ENCODE measurements at regions of chr17 and their contacts with region 1.

Region 1: GRCh38 chr17:48543107-48543853 is 1.6 kb downstream of the HOXB2 start:
- DNase-seq: peak; percentile 67
- H3K4me3 ChIP-seq: peak overlapping the region; percentile 85
- H3K27ac ChIP-seq: peak overlapping the region; percentile 95
- H3K4me1 ChIP-seq: peaks cover 38% of the 10 kb centered on the region
- H3K27me3 ChIP-seq: no peaks in the 10 kb centered on the region
- CTCF ChIP-seq: no peak; the same call in 1 of the 2 replicates

Region 2: GRCh38 chr17:48505787-48506645 is 37.3 kb before region 1 on chr17:
- CTCF ChIA-PET with region 1: no interaction called
- POLR2A ChIA-PET with region 1: no interaction called
- intact Hi-C with region 1: no loop called
- DNase-seq: peak; percentile 55
- H3K4me3 ChIP-seq: no peak overlapping the region
- H3K27ac ChIP-seq: no peak overlapping the region
- H3K4me1 ChIP-seq: no peaks in the 10 kb centered on the region
- H3K27me3 ChIP-seq: no peaks in the 10 kb centered on the region
- CTCF ChIP-seq: no peak

Region 3: GRCh38 chr17:48577946-48578615 is 34.8 kb after region 1 on chr17 and contains the start of gene HOXB4:
- CTCF ChIA-PET with region 1: no interaction called
- POLR2A ChIA-PET with region 1: interaction called, 9 read pairs
- intact Hi-C with region 1: loop called (anchors 2 kb)
- DNase-seq: peak; percentile 89
- H3K4me3 ChIP-seq: peak within 1 kb of the TSS; percentile 57
- H3K27ac ChIP-seq: peak within 1 kb of the TSS; percentile 79
- H3K4me1 ChIP-seq: peaks cover 40% of the 10 kb centered on the region
- H3K27me3 ChIP-seq: no peaks in the 10 kb centered on the region
- CTCF ChIP-seq: no peak
- total RNA-seq, gene HOXB4: 9.7 and 11.9 TPM in 2 replicates

Region 4: DNA sequence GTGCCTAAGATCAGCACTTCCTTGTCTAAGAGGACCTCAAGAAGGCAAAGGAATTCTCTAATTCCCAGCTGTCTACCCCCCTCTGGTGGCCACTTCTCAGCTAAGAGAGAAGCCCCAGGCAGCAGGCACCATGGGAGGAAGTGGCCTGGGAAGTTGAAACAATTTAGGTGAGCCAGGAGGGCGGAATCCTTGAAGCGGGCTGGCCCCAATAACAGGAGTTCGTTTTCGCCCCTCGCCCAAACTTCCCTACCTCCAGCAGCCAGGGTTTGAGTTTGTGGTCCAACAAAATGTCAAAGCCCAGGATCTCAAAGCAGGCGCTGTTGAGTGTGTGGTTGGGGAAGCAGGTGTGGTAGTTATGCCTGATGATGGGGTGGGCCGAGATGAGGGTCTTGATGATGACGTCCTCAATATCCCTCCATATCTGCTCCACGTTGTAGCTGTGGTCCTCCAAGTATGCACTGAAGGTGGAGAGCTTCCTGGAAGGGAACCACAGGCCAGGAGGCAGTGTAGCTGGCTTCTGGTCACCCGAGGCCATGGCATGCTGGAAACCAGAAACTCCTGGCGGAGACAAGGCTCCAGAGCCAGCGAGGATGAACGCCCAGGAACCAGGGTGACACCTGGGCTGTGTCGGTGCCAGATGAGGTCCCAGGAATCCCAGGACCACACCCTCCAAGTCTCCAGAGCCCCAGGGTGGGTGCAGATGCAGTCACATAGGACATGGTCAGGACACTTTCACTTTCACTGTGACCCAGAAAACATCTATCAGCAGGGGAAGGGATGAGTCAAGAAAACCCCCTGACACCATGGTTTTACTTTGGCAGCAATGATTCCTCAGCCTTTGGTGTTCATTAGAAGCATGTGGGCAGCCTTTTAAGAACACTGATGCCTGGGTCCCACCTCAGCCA is 248.1 kb after region 1 on chr17:
- CTCF ChIA-PET with region 1: no interaction called
- POLR2A ChIA-PET with region 1: no interaction called
- intact Hi-C with region 1: no loop called
- DNase-seq: peak; percentile 94
- H3K4me3 ChIP-seq: no peak overlapping the region
- H3K27ac ChIP-seq: no peak overlapping the region
- H3K4me1 ChIP-seq: peaks cover 9% of the 10 kb centered on the region
- H3K27me3 ChIP-seq: no peaks in the 10 kb centered on the region
- CTCF ChIP-seq: peak; percentile 95